ENCODE measurements at regions of chr1 and their contacts with region 1.

Region 1: DNA sequence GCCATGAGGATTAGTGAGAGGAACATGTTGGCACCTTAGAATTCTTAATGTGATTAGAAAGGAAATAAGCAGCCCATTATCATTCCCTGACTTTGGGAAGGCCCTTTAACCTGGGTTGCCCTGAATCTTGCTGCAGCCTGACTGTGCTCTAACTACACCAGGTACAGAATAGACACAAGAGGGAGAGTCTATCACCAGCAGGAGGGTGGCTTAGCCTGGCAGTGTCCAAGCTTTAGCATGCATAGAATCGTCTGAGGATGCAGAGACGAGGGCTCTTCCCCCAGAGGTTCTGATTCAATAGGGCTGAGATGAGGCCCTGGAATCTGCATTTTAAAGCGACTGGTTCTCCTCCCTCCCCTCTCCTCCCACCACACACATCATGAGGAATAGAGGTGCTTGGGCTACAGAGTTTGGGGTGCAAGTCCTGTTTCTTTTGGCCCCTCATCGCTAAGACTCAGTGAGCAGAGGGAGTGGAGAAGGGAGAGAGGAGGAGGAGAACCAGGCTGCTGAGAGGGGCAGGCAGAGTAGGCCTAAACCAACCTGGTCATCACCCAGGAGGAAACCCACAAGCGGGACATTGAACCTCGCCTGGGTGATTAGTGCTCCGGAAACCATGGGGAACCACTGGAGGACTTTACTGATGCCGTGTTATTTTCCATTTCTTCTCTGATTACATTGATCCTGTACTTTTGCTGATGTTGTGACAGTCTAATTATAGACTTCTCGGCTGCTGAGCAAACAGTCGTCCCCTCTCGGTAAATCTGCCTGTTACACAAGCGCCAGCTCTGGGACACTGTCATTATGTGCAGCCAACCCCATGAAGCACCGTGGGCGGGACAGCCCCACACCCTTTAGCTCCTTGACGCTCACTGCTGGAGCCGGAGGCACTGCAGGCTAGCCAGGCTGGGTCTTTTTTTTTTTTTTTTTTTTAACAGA is 6.3 kb upstream of the TENT5C start:
- DNase-seq: no peak
- ATAC-seq: peak in 7 of 8 donors; percentile 40 to 87 (median 72)
- H3K4me3 ChIP-seq: no peak overlapping the region
- H3K27ac ChIP-seq: peak overlapping the region in 1 of 10 donors; percentile 34
- H3K4me1 ChIP-seq: peaks cover 0 to 2% (median 0%) of the 10 kb centered on the region in 9 donors
- H3K27me3 ChIP-seq: peaks cover 0 to 1% (median 0%) of the 10 kb centered on the region in 7 donors
- CTCF ChIP-seq: no peak

Region 2: DNA sequence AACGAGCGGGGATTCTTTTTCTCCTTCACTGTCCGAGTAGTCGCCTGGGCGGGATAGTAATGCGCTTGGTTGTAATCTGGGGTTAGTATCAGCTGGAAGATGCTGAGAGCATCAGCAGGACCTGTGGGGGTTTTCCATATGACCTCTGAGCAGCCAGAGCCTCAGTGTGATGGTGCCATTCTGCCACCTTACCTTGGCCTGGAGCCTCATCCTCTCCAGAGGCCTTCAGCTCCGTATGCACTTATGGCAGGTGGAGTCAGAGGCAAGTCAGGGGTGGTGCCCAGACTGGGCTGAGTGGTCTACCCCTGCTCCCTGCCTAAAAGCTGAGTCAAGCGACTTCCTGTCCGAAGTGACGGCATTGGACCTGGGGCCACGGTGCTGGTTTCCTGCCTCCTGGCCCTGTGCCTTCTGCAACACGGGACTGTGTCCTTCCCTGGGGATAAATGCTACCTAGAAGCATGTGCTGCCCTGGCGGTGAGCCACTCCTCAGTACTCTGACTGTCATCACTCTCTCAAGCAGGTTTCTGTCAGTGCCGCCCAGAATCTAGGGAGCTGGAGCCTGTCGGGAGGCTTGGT is 31.0 kb after region 1 on chr1:
- intact Hi-C with region 1: loop called in 1 of 10 experiments (anchors 1 kb)
- DNase-seq: peak; percentile 64 to 70
- ATAC-seq: peak; percentile 75 to 96 (median 90)
- H3K4me3 ChIP-seq: no peak overlapping the region
- H3K27ac ChIP-seq: no peak overlapping the region
- H3K4me1 ChIP-seq: peaks cover 0 to 19% (median 0%) of the 10 kb centered on the region in 9 donors
- H3K27me3 ChIP-seq: no peaks in the 10 kb centered on the region
- CTCF ChIP-seq: no peak

Region 3: DNA sequence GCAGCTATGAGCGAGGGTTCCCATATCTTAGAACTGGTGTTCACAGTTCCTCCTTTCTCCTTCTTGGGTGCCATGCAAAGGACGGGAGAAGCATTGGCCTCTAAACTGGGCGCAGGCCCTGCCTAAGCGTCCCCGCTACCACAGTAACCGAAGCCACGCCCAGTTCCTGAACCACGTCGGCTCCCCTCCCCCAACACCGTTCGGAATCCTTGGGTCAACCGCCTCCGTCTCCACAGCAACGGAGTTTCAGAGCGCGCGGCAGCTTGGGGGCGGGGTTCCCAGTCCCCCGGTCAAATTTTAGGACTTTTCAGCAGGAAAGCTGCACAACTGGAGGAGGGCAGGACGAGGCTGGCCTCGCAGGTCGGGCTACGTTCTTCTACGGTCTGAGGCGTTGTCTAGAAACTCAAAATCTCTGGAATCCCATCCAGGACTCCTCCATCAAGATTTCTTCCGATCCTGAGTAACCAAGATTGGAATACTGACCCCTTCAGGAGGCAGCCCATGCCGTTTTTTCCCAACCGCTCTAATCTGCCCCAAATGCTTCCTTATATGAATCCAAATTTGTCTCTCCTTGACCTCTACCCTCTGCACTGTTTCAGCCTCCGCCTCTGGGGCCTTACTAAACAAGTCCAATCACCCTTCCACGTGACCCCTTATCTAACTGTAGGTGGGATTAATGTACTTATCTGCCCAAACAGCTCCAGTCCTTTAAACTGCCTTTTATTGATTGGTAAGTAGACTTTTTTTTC is 585.7 kb after region 1 on chr1 and contains the start of gene SPAG17:
- intact Hi-C with region 1: no loop called
- DNase-seq: peak; percentile 62 to 67
- ATAC-seq: peak; percentile 68 to 92 (median 83)
- H3K4me3 ChIP-seq: peak within 1 kb of the TSS in 9 of 10 donors; percentile 7 to 49 (median 41)
- H3K27ac ChIP-seq: no peak within 1 kb of the TSS
- H3K4me1 ChIP-seq: peaks cover 0 to 5% (median 0%) of the 10 kb centered on the region in 9 donors
- H3K27me3 ChIP-seq: peaks cover 0 to 9% (median 0%) of the 10 kb centered on the region in 7 donors
- CTCF ChIP-seq: peak in 1 of 9 donors; percentile 17
- total RNA-seq, gene SPAG17: 0.06 TPM in 1 of 10 donors, not detected in the others